Activated B cell treated with CpG ODN at 0.5 μM for 24 hours (primary cell): ENCODE measurements at regions of chr11 and their contacts with region 1.

Region 1: DNA sequence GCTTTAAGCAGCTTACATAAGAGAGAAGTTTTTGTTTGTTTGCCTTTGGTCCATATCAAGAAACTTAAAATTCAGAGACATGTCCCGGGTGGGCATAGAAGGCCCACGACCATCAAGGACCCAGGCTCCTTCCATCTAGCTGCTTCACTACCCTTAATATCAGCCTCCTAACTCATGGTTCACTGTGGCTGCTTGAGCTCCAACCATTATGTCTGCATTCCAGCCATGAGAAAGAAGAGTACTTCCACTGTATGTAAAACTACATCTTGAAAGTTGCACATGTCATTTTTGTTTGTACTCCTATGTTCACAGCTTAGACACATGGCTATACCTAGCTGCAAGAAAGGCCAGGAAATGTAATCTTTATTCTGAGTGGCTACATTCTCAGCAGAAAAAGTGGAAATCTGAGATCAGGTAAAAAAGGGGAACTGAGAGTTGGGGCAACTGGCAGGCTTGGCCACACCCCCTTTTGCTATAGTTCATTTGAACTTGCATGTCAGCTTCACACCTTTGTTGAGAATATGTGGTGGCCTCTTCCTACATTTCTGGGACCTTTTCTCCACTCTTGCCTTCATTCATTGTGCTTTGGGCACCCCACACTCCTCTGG is 81.3 kb upstream of the TP53I11 start:
- DNase-seq: no peak
- ATAC-seq: peak; percentile 40
- H3K4me3 Mint-ChIP-seq: peak overlapping the region; percentile 55
- H3K27ac Mint-ChIP-seq: peak overlapping the region; percentile 81
- H3K4me1 Mint-ChIP-seq: peaks cover 64% of the 10 kb centered on the region
- H3K27me3 Mint-ChIP-seq: no peaks in the 10 kb centered on the region
- CTCF ChIP-seq: no peak

Region 2: DNA sequence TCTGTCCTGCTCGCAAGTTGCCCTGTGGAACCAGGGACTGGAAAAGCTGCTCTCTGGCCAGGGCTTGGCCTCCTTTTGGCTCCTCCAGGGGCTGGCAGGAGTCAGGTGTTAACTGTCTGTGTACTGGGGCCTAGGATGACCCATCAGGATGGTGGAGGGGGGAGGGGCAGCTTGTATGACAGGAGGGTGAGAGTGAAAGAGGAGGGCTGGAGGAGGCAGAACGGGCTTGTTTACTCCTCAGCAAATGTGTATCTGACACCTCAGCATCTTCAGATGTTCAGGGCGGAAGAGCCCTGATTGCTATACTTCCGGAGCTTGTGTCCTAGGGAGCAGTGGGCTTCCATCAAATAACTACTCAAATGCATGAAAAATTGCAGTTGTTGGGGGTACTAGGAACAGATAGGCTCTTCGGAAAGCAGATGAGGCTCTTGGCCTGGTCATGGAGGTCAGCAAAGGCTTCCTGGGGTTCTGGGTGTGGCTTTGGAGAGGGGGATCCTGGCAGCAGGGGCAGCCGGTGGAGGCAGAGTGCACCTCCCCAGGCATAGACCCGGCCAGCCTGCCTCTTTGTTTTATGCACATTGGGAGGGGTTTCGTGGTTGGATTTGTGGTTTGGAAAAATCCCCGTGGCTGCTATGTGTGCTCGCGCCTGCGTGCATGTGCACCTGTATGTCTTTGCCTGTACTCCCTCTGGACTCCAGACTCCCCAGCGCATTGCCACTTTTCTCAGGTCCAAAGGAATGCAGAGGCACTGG is 435.3 kb before region 1 on chr11:
- CTCF ChIA-PET with region 1: no interaction called
- POLR2A ChIA-PET with region 1: interaction called, 7 read pairs
- intact Hi-C with region 1: loop called (anchors 1 kb)
- DNase-seq: peak; percentile 69
- ATAC-seq: peak; percentile 30
- H3K4me3 Mint-ChIP-seq: peak overlapping the region; percentile 82
- H3K27ac Mint-ChIP-seq: peak overlapping the region; percentile 94
- H3K4me1 Mint-ChIP-seq: peaks cover 95% of the 10 kb centered on the region
- H3K27me3 Mint-ChIP-seq: no peaks in the 10 kb centered on the region
- CTCF ChIP-seq: no peak

Region 3: DNA sequence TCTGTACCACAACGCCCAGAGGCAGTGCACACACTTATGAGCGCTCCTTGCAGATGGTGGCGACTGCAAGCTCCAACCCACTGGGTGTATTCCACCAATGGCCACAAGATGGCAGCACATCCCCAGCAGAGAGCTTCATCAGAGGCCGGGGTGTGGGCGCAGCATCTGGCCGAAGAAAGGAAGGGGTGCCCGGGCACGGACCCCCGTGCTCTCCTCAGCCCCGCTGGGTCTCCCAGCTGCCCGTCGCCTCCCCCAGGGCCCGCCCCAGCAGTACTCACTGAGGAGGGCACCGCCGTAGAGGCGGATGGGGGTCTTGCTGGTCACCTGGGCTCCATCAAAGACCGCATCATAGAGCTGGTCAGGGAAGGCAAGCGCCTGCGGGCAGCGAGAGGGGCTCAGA is 95.5 kb before region 1 on chr11:
- CTCF ChIA-PET with region 1: interaction called, 25 read pairs
- POLR2A ChIA-PET with region 1: interaction called, 10 read pairs
- intact Hi-C with region 1: no loop called
- DNase-seq: peak; percentile 84
- ATAC-seq: peak; percentile 95
- H3K4me3 Mint-ChIP-seq: no peak overlapping the region
- H3K27ac Mint-ChIP-seq: no peak overlapping the region
- H3K4me1 Mint-ChIP-seq: peaks cover 27% of the 10 kb centered on the region
- H3K27me3 Mint-ChIP-seq: no peaks in the 10 kb centered on the region
- CTCF ChIP-seq: peak; percentile 71

Region 4: GRCh38 chr11:44950625-44951476 is 81.2 kb before region 1 on chr11 and contains the start of gene TP53I11:
- CTCF ChIA-PET with region 1: interaction called, 5 read pairs
- POLR2A ChIA-PET with region 1: interaction called, 20 read pairs
- intact Hi-C with region 1: loop called (anchors 1 kb)
- DNase-seq: peak; percentile 74
- ATAC-seq: peak; percentile 76
- H3K4me3 Mint-ChIP-seq: peak within 1 kb of the TSS; percentile 91
- H3K27ac Mint-ChIP-seq: peak within 1 kb of the TSS; percentile 87
- H3K4me1 Mint-ChIP-seq: peaks cover 60% of the 10 kb centered on the region
- H3K27me3 Mint-ChIP-seq: no peaks in the 10 kb centered on the region
- CTCF ChIP-seq: peak; percentile 44
- total RNA-seq, gene TP53I11: 145 and 175 TPM in 2 replicates

Region 5: GRCh38 chr11:45007011-45007410 is 25.0 kb before region 1 on chr11:
- CTCF ChIA-PET with region 1: no interaction called
- POLR2A ChIA-PET with region 1: no interaction called
- intact Hi-C with region 1: no loop called
- DNase-seq: no peak
- ATAC-seq: no peak
- H3K4me3 Mint-ChIP-seq: no peak overlapping the region
- H3K27ac Mint-ChIP-seq: no peak overlapping the region
- H3K4me1 Mint-ChIP-seq: no peaks in the 10 kb centered on the region
- H3K27me3 Mint-ChIP-seq: no peaks in the 10 kb centered on the region
- CTCF ChIP-seq: no peak

Region 6: DNA sequence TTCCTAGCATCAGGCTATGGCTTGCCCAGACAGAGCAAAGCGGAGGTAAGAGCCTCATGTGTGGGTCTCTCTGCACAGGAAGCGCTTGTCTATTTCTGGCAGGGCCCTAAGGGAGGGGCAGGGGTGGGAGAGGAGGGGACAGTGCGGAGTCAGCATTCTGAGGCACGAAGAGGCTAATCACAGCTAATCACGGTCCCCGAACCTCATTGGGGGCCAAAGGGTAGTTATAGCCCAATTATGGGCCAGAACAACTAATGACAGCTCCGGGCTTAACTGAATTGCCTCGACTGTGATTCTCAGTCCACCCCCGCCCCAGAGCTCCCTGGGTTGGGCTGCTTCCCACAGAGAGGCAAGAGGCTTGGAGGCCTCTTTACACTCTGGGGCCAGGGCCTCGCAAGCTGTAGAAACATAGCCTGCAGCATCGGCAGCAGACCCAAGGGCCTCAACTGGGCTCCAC is 41.7 kb after region 1 on chr11:
- CTCF ChIA-PET with region 1: interaction called, 14 read pairs
- POLR2A ChIA-PET with region 1: interaction called, 81 read pairs
- intact Hi-C with region 1: loop called (anchors 2 kb)
- DNase-seq: no peak
- ATAC-seq: peak; percentile 90
- H3K4me3 Mint-ChIP-seq: peak overlapping the region; percentile 48
- H3K27ac Mint-ChIP-seq: peak overlapping the region; percentile 66
- H3K4me1 Mint-ChIP-seq: peaks cover 43% of the 10 kb centered on the region
- H3K27me3 Mint-ChIP-seq: no peaks in the 10 kb centered on the region
- CTCF ChIP-seq: no peak